CD4-positive, alpha-beta T cell (primary cell): ENCODE measurements at regions of chr12 and their contacts with region 1.

Region 1: GRCh38 chr12:27696864-27697564 is 767 bp downstream of the REP15 start:
- DNase-seq: no peak
- ATAC-seq: no peak
- H3K4me3 ChIP-seq: no peak overlapping the region
- H3K4me3 Mint-ChIP-seq: no peak overlapping the region
- H3K27ac ChIP-seq: no peak overlapping the region
- H3K27ac Mint-ChIP-seq: no peak overlapping the region
- H3K4me1 ChIP-seq: no peaks in the 10 kb centered on the region
- H3K4me1 Mint-ChIP-seq: no peaks in the 10 kb centered on the region
- H3K27me3 ChIP-seq: no peaks in the 10 kb centered on the region
- H3K27me3 Mint-ChIP-seq: no peaks in the 10 kb centered on the region
- CTCF ChIP-seq: no peak

Region 2: GRCh38 chr12:27257104-27257843 is 439.7 kb before region 1 on chr12:
- CTCF ChIA-PET with region 1: no interaction called
- POLR2A ChIA-PET with region 1: no interaction called
- intact Hi-C with region 1: loop called in 1 of 2 experiments (anchors 10 kb)
- DNase-seq: no peak
- ATAC-seq: no peak
- H3K4me3 ChIP-seq: no peak overlapping the region
- H3K4me3 Mint-ChIP-seq: no peak overlapping the region
- H3K27ac ChIP-seq: no peak overlapping the region
- H3K27ac Mint-ChIP-seq: no peak overlapping the region
- H3K4me1 ChIP-seq: no peaks in the 10 kb centered on the region
- H3K4me1 Mint-ChIP-seq: peaks cover 49% of the 10 kb centered on the region
- H3K27me3 ChIP-seq: no peaks in the 10 kb centered on the region
- H3K27me3 Mint-ChIP-seq: no peaks in the 10 kb centered on the region
- CTCF ChIP-seq: no peak

Region 3: GRCh38 chr12:27583057-27583797 is 113.8 kb before region 1 on chr12:
- CTCF ChIA-PET with region 1: no interaction called
- POLR2A ChIA-PET with region 1: no interaction called
- intact Hi-C with region 1: no loop called
- DNase-seq: no peak
- ATAC-seq: no peak
- H3K4me3 ChIP-seq: no peak overlapping the region
- H3K4me3 Mint-ChIP-seq: no peak overlapping the region
- H3K27ac ChIP-seq: no peak overlapping the region
- H3K27ac Mint-ChIP-seq: no peak overlapping the region
- H3K4me1 ChIP-seq: no peaks in the 10 kb centered on the region
- H3K4me1 Mint-ChIP-seq: peaks cover 8% of the 10 kb centered on the region
- H3K27me3 ChIP-seq: no peaks in the 10 kb centered on the region
- H3K27me3 Mint-ChIP-seq: no peaks in the 10 kb centered on the region
- CTCF ChIP-seq: no peak